Mammary epithelial cell (primary cell): ENCODE measurements at regions of chr16 and their contacts with region 1.

Region 1: DNA sequence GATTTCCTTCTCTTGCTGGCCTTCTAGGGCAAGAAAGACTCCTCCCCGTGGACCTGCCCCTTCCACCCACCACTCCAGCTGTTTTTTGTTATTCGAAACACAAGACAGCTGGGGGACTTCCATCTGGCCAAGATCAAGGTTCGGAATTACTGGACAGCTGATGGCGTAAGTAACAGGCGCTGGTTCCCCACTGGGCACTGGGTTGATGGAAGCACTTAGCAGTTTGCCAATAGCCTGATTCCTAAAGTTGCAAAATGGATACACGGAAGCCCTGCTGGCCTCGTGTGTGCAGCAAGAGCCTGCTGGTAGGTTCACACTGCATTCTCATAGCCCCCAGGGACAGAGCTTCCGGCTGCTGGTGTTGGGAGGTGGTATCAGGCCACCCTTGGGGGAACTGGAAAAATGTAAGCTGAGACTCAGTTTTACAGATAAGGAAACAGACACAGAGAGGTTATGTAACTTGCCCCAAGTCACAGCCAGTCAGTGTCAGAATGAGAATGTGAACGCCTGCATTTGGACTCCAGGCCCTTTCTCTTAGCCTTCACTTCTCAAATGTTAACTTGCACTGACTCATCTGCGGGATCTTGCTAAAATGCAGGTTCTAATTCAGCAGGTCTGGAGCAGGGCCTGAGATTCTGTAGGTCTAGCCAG is 171.7 kb downstream of the KATNIP start:
- DNase-seq: no peak
- H3K4me3 ChIP-seq: no peak overlapping the region
- H3K27ac ChIP-seq: no peak overlapping the region
- H3K4me1 ChIP-seq: peaks cover 9% of the 10 kb centered on the region
- H3K27me3 ChIP-seq: no peaks in the 10 kb centered on the region
- CTCF ChIP-seq: no peak

Region 2: GRCh38 chr16:27676839-27677238 is 44.8 kb before region 1 on chr16:
- CTCF ChIA-PET with region 1: no interaction called
- dilution Hi-C with region 1: loop called (anchors 5 kb)
- in situ Hi-C with region 1: no loop called
- intact Hi-C with region 1: no loop called
- DNase-seq: no peak
- H3K4me3 ChIP-seq: no peak overlapping the region
- H3K27ac ChIP-seq: no peak overlapping the region
- H3K4me1 ChIP-seq: no peaks in the 10 kb centered on the region
- H3K27me3 ChIP-seq: no peaks in the 10 kb centered on the region
- CTCF ChIP-seq: no peak

Region 3: DNA sequence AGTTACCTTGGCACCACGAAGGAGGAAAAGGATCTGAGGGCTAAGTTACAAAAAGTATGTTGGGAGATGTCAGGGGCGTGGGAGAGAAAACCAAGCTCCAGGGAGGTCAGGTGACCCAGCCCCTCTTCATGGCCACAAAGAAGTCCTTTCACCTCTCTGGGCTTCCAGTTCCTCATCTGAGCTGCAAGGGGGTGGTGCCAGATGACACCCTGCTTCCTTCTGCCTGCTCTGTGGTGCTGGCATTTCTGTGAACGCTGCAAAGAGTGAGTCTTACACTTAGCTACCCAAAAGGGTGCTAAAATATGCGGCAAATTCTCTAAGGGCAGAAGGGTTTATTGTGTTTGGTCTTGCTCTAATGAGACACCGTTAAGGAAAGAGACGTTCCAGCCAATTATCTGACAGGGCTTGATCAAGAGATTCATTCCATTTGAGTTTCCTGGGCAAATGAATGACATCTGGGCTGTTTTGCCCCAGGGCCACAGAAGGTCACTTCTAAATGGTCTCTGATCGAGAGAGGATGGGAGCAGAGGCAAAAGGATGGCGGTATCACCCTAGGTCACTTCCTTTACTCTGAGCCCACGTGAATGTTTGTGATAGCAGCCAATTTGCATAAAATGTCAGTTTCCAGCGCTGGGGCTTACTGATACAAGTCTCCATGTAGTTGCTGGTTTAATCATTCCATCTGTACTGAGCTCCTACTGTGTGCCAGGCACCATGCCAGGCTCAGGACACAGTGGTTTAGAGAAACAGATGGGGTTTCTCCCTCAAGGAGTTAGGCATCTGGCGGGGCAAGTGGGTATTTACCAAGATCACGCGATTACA is 38.5 kb after region 1 on chr16:
- CTCF ChIA-PET with region 1: no interaction called
- dilution Hi-C with region 1: loop called (anchors 5 kb)
- in situ Hi-C with region 1: no loop called
- intact Hi-C with region 1: no loop called
- DNase-seq: no peak
- H3K4me3 ChIP-seq: no peak overlapping the region
- H3K27ac ChIP-seq: no peak overlapping the region
- H3K4me1 ChIP-seq: no peaks in the 10 kb centered on the region
- H3K27me3 ChIP-seq: no peaks in the 10 kb centered on the region
- CTCF ChIP-seq: no peak